ENCODE measurements at regions of chr2 and their contacts with region 1.

Region 1: GRCh38 chr2:126272401-126272800 is 383.6 kb upstream of the GYPC start:
- DNase-seq: no peak
- H3K4me3 ChIP-seq: no peak overlapping the region
- H3K27ac ChIP-seq: no peak overlapping the region
- H3K4me1 ChIP-seq: no peaks in the 10 kb centered on the region
- H3K27me3 ChIP-seq: no peaks in the 10 kb centered on the region
- CTCF ChIP-seq: no peak

Region 2: GRCh38 chr2:126381091-126381490 is 108.7 kb after region 1 on chr2:
- CTCF ChIA-PET with region 1: no interaction called
- dilution Hi-C with region 1: no loop called
- in situ Hi-C with region 1: no loop called
- intact Hi-C with region 1: no loop called
- DNase-seq: no peak
- H3K4me3 ChIP-seq: no peak overlapping the region
- H3K27ac ChIP-seq: no peak overlapping the region
- H3K4me1 ChIP-seq: no peaks in the 10 kb centered on the region
- H3K27me3 ChIP-seq: no peaks in the 10 kb centered on the region
- CTCF ChIP-seq: no peak

Region 3: GRCh38 chr2:126413079-126413478 is 140.7 kb after region 1 on chr2:
- CTCF ChIA-PET with region 1: no interaction called
- dilution Hi-C with region 1: no loop called
- in situ Hi-C with region 1: no loop called
- intact Hi-C with region 1: no loop called
- DNase-seq: no peak
- H3K4me3 ChIP-seq: no peak overlapping the region
- H3K27ac ChIP-seq: no peak overlapping the region
- H3K4me1 ChIP-seq: no peaks in the 10 kb centered on the region
- H3K27me3 ChIP-seq: no peaks in the 10 kb centered on the region
- CTCF ChIP-seq: no peak

Region 4: DNA sequence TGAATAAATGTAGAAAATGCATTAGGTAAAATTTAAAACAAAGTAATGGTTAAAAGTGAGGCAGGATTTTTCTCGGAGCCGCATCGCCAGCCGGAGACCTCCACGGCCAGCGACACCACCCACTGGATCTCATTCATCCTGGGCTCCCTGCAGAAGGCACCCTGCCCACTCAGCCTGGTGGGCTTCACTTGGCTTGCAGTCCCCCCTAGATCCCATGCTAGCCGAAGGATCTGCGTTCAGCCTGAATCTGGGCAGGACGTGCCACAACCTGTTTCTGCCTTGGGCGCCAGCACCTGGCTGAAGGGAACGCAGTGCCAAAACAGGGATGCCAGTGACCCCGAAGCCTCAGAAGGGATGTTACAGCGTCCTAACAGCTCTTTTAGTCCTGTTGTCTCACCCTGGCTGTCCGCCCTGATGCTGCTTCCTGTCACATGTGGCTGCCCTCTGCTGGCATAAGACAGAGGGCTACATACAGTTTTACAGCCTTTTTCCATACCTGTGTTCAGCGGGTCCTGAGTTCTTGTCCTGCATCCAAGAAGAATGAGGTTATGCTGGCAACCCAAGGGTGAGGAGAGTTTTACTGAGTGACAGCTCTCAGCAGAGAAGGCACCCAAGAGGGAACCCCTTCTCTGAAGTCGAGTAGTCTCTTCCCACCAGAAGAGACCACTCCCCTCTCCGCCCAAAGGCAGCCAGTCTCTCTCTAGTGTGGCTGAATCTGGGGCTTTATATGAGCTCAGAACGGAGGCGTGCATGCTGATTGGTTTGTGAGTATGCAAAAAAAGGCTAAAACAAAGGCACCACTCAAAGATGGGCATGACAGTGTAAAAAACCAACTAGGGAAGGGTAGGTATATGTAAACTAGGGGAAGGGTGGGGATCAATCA is 210.4 kb after region 1 on chr2:
- CTCF ChIA-PET with region 1: interaction called, 17 read pairs
- dilution Hi-C with region 1: no loop called
- in situ Hi-C with region 1: no loop called
- intact Hi-C with region 1: no loop called
- DNase-seq: no peak
- H3K4me3 ChIP-seq: no peak overlapping the region
- H3K27ac ChIP-seq: no peak overlapping the region
- H3K4me1 ChIP-seq: no peaks in the 10 kb centered on the region
- H3K27me3 ChIP-seq: no peaks in the 10 kb centered on the region
- CTCF ChIP-seq: no peak

Measured in mammary epithelial cell (primary cell).